ENCODE measurements at regions of chr11 and their contacts with region 1.

Region 1: DNA sequence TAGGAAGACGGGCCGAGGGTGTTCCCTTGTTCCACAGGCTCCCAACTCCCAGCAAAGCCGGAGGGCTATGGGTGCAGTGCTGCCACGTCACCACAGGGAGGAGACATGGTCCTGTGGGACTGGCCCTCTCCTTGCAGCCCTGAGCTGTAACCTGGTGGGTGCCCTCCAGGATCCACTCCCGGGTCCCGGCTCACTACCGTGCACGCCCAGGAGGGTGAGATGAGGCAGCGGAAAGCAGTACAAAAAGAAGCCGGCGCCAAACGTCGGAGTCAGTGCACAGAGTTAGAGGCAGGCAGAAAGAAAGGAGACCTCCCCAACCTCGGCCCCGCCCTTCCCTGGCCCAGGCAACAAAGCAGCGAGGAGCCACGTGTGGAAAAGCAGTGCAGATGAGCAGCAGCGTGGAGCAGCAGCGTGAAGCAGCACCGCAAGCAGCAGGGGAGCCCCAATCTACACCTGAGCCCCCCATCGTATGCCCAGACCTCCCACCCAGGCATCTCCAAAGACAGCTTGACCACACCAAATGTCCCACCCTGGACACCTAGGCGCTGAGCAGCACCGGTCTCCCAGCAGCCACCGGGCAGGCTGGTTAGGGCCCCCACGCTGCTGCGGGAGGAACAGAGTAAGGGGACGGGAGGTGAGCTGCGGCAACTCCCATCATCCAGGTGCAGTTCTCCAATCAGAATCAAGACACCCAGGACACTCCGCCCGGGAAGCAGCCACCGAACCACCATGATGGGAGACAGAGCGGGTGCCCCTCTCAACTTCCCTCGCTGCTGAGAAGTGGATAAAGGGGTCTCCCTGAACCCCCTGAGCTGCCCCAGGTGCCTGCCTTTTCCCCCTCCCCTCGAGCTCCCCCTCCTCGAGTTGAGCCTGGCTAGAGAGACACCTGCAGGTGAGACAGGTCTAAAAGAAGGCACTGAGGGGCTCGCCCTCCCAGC is 28.8 kb downstream of the IGSF9B start:
- DNase-seq: peak; percentile 59
- H3K4me3 Mint-ChIP-seq: peak overlapping the region; percentile 79
- H3K27ac Mint-ChIP-seq: peak overlapping the region; percentile 80
- H3K4me1 Mint-ChIP-seq: peaks cover 31% of the 10 kb centered on the region
- H3K27me3 Mint-ChIP-seq: no peaks in the 10 kb centered on the region

Region 2: DNA sequence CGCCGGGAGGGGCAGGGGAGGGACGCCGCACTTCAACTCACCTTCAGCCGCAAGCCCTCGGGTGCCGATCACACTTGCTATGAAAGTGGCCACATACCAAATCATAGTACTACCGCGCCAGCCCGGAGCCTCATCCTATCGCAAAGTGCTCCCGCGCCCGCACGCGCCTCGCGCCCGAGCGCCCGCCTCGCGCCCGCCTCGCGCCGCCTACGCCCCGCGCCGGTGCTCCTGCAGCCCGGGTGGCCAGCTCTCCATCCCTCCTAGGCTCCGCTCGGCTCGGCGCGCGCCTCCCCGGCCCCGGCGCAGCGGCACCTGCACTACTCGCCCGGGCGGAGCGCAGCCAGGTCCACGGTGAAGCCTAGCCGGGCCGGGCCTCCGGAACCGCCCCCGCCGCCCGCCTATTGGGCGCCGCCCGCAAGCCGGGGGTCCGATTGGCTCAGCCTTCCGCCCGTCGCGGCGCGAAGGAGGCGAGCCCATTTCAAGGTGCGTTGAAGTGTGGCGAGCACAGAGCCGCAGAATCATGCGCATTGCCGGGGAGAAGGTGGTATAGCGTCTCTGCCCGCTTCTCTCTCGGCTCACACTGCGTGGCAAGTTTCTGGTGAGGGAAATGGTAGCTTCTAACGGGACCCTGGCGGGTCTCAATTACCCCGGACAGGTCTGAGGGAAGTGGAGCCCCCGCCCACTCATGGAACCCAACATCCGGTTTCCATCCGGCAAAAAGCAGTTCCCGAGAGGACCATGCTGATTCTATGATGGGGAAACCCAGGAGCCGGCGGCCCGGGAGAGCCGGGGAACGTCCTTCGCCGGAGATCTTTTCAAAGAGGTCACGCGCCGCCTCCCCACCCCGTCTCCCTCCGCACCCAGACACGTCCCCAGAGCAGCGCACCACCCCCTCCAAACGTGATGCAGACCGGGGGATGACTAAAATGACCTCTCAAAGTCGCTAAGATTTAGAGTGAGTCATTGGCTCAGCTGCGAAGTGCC is 29.0 kb after region 1 on chr11 and contains the start of gene IGSF9B:
- intact Hi-C with region 1: loop called (anchors 1 kb)
- DNase-seq: peak; percentile 92
- H3K4me3 Mint-ChIP-seq: peak within 1 kb of the TSS; percentile 88
- H3K27ac Mint-ChIP-seq: peak within 1 kb of the TSS; percentile 89
- H3K4me1 Mint-ChIP-seq: peaks cover 47% of the 10 kb centered on the region
- H3K27me3 Mint-ChIP-seq: peaks cover 17% of the 10 kb centered on the region
- total RNA-seq, gene IGSF9B: 73.6 and 77.2 TPM in 2 replicates

Region 3: DNA sequence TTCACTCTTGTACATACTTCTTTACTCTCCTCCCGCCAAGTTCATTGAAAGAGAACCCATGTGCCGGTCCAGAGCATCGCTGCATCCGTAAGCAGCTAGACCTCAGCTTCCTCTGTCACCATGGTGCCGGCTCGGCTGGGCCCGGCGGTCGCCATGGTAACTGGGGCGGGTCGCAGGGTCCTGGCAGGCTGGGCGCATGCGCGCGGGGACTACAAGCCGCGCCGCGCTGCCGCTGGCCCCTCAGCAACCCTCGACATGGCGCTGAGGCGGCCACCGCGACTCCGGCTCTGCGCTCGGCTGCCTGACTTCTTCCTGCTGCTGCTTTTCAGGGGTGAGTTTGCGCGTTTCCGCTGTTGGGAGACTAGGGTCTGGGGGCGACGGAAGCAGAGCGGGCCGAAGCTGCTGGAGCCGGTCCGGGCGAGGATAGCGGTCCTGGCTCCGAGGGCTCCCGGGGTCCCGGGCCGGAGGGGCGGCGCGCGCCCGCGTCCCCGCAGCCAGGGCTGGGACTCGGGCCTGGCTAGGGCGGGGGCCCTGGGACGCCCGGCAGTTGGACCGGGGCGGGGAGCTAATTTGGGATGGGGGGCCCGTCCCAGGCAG is 141.0 kb after region 1 on chr11 and contains the start of gene JAM3:
- intact Hi-C with region 1: loop called (anchors 1 kb)
- DNase-seq: peak; percentile 97
- H3K4me3 Mint-ChIP-seq: peak within 1 kb of the TSS; percentile 88
- H3K27ac Mint-ChIP-seq: peak within 1 kb of the TSS; percentile 86
- H3K4me1 Mint-ChIP-seq: peaks cover 8% of the 10 kb centered on the region
- H3K27me3 Mint-ChIP-seq: peaks cover 59% of the 10 kb centered on the region
- total RNA-seq, gene JAM3: 3.5 and 3.9 TPM in 2 replicates

Region 4: DNA sequence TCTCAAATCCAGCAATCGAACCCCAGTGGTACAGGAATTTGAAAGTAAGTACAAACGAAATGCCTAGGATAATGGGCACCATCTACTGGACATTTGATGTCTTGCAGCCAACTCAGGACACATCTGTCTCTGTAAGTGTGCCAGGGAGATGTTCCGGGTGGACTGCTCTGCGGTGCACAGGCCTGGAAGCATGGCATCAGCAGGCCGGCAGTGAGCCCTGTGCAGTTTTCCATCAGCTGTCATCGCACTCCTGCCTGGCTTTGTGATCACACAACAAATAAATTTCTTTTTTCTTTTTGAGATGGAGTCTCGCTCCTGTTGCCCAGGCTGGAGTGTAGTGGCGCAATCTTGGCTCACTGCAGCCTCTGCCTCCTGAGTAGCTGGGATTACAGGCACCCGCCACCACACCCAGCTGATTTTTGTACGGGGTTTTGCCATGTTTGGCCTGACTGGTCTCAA is 211.9 kb after region 1 on chr11:
- intact Hi-C with region 1: loop called (anchors 1 kb)
- DNase-seq: peak; percentile 26
- H3K4me3 Mint-ChIP-seq: no peak overlapping the region
- H3K27ac Mint-ChIP-seq: no peak overlapping the region
- H3K4me1 Mint-ChIP-seq: peaks cover 13% of the 10 kb centered on the region
- H3K27me3 Mint-ChIP-seq: no peaks in the 10 kb centered on the region

Region 5: DNA sequence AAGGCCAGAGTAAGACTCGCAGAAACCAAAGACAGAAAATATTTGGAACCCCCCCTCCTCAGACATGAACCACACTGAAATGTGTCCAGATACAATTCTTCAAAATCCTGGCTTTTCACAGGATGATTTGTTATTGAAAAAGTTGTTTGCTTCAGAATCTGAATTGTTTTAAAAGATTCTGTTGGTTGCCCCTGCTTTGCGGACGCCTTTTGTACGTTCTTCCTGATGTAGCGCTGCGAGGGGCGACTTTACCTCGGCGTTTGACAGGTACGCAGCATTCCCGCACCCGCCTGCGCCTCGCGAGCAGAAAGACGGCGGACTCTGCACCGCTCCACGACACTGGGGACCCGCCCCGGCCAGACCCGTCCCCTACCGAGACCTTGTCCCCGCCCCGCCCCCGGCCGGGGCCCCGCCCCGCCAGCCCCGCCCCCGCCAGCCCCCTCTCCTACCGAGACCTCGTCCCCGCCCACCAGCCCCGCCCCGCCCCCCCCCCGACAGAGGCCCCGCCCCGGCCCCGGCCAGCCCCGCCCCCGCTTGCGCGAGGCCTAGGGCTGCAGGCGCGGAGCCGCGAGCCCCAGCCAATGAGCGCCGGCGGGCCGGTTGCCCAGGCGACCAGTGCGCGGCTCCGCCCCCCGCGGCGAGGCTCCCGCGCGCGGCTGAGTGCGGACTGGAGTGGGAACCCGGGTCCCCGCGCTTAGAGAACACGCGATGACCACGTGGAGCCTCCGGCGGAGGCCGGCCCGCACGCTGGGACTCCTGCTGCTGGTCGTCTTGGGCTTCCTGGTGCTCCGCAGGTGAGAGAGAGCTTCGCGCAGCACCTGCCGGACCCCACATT is 403.6 kb after region 1 on chr11 and contains the start of gene GLB1L2:
- intact Hi-C with region 1: loop called (anchors 1 kb)
- DNase-seq: peak; percentile 84
- H3K4me3 Mint-ChIP-seq: peak within 1 kb of the TSS; percentile 85
- H3K27ac Mint-ChIP-seq: peak within 1 kb of the TSS; percentile 59
- H3K4me1 Mint-ChIP-seq: peaks cover 24% of the 10 kb centered on the region
- H3K27me3 Mint-ChIP-seq: peaks cover 39% of the 10 kb centered on the region
- total RNA-seq, gene GLB1L2: 8.9 and 11.5 TPM in 2 replicates

Measured in activated T-helper 1 cell treated with anti-CD3 and anti-CD28 coated beads, Interleukin-12 subunit alpha, Interleukin-12 subunit beta, Interleukin-2, Interleukin-4 antibody, amounts not matched to agents 30 ng/mL and 10 ng/mL and 1 ng/mL, durations not matched to agents 14 hours and 24 hours and 36 hours (primary cell).